Activated naive CD8-positive, alpha-beta T cell treated with anti-CD3 and anti-CD28 coated beads, Interleukin-2, amount 10 ng/mL, durations not matched to agents 7 days and 5 days (primary cell): ENCODE measurements at regions of chr16 and their contacts with region 1.

Region 1: GRCh38 chr16:3879887-3880564 is 487 bp downstream of the CREBBP start:
- DNase-seq: peak; percentile 84
- ATAC-seq: peak; percentile 60
- H3K4me3 Mint-ChIP-seq: peak overlapping the region; percentile 90
- H3K27ac Mint-ChIP-seq: no peak overlapping the region
- H3K4me1 Mint-ChIP-seq: peaks cover 39% of the 10 kb centered on the region
- H3K27me3 Mint-ChIP-seq: peaks cover 6% of the 10 kb centered on the region

Region 2: GRCh38 chr16:3717235-3718018 is 162.6 kb before region 1 on chr16 and contains the start of gene TRAP1:
- POLR2A ChIA-PET with region 1: interaction called, 12 read pairs
- DNase-seq: peak; percentile 96
- ATAC-seq: peak; percentile 96
- H3K4me3 Mint-ChIP-seq: peak within 1 kb of the TSS; percentile 93
- H3K27ac Mint-ChIP-seq: peak within 1 kb of the TSS; percentile 92
- H3K4me1 Mint-ChIP-seq: peaks cover 22% of the 10 kb centered on the region
- H3K27me3 Mint-ChIP-seq: no peaks in the 10 kb centered on the region
- total RNA-seq, gene TRAP1: 116 to 121 TPM